Naive thymus-derived CD4-positive, alpha-beta T cell (primary cell): ENCODE measurements at regions of chr1 and their contacts with region 1.

Region 1: DNA sequence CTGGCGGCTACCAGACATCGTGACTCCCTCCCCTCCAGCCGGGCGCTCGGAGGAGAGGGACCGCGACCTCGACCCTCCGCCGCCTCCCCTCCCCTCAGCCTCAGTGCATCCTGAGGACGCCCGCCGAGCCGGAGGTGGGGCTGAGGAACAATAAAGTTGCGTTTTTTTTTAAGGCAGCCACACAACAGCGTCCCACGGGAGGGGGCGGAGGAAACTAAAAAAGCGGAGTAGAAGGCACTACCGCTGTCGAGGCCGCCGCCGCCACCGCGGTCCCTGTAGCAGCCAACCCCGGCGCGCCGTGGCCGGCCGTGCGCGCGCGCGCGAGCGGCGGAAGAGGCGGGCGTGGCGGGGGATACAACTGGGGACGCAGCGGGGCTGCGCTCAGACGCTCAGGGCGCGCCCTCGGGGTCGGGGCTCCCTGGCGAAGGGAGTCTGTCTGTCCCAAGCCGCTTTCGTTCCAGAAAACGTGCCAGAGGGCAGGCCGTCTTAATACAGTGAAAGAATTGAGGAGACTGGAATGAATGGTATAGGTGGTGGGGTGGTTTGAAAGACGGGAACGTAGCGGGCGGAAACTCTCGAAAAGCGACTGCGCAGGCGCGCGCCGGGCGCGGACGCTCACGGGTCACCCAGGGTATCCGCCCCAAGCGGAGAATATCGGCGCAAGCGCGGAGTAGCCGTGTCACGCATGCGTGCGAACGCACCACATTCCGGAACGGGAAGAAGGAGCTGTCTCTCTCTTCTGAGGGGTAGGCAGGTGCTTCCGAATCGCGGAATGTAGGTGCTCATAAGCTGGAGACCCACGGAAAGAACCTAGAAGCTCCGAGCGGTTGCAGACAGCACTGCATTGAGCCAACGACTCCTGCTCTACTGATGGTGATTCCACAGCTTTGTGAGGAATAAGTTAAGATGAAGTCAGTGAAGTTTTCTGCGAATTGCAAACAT is at the start of gene COP1:
- DNase-seq: peak; percentile 89 to 97 (median 96)
- ATAC-seq: peak; percentile 91
- H3K4me3 ChIP-seq: peak within 1 kb of the TSS; percentile 90
- H3K4me3 Mint-ChIP-seq: peak within 1 kb of the TSS; percentile 81 to 100 (median 98)
- H3K27ac ChIP-seq: peak within 1 kb of the TSS; percentile 81
- H3K27ac Mint-ChIP-seq: peak within 1 kb of the TSS; percentile 93 to 100 (median 97)
- H3K4me1 ChIP-seq: peaks cover 10 to 24% of the 10 kb centered on the region in 2 donors
- H3K4me1 Mint-ChIP-seq: peaks cover 20 to 56% (median 47%) of the 10 kb centered on the region in 7 donors
- H3K27me3 ChIP-seq: no peaks in the 10 kb centered on the region
- H3K27me3 Mint-ChIP-seq: peaks cover 0 to 3% (median 0%) of the 10 kb centered on the region in 5 donors
- total RNA-seq, gene COP1: 39.1 to 57.0 (median 43.9) TPM

Region 2: GRCh38 chr1:174333437-174333836 is 1873.8 kb before region 1 on chr1:
- CTCF ChIA-PET with region 1: no interaction called
- POLR2A ChIA-PET with region 1: no interaction called
- intact Hi-C with region 1: no loop called
- DNase-seq: no peak
- ATAC-seq: no peak
- H3K4me3 ChIP-seq: no peak overlapping the region
- H3K4me3 Mint-ChIP-seq: no peak overlapping the region
- H3K27ac ChIP-seq: no peak overlapping the region
- H3K27ac Mint-ChIP-seq: no peak overlapping the region
- H3K4me1 ChIP-seq: no peaks in the 10 kb centered on the region
- H3K4me1 Mint-ChIP-seq: peaks cover 0 to 5% (median 0%) of the 10 kb centered on the region in 7 donors
- H3K27me3 ChIP-seq: no peaks in the 10 kb centered on the region
- H3K27me3 Mint-ChIP-seq: no peaks in the 10 kb centered on the region

Region 3: GRCh38 chr1:176119549-176119948 is 87.7 kb before region 1 on chr1:
- CTCF ChIA-PET with region 1: no interaction called
- POLR2A ChIA-PET with region 1: no interaction called
- intact Hi-C with region 1: loop called in 1 of 2 experiments (anchors 5 kb)
- DNase-seq: no peak
- ATAC-seq: no peak
- H3K4me3 ChIP-seq: no peak overlapping the region
- H3K4me3 Mint-ChIP-seq: no peak overlapping the region
- H3K27ac ChIP-seq: no peak overlapping the region
- H3K27ac Mint-ChIP-seq: no peak overlapping the region
- H3K4me1 ChIP-seq: no peaks in the 10 kb centered on the region
- H3K4me1 Mint-ChIP-seq: peaks cover 0 to 8% (median 0%) of the 10 kb centered on the region in 7 donors
- H3K27me3 ChIP-seq: no peaks in the 10 kb centered on the region
- H3K27me3 Mint-ChIP-seq: no peaks in the 10 kb centered on the region

Region 4: GRCh38 chr1:176159993-176160392 is 47.2 kb before region 1 on chr1:
- CTCF ChIA-PET with region 1: no interaction called
- POLR2A ChIA-PET with region 1: interaction called, 5 read pairs
- intact Hi-C with region 1: loop called (anchors 5 kb)
- DNase-seq: no peak
- ATAC-seq: no peak
- H3K4me3 ChIP-seq: no peak overlapping the region
- H3K4me3 Mint-ChIP-seq: no peak overlapping the region
- H3K27ac ChIP-seq: no peak overlapping the region
- H3K27ac Mint-ChIP-seq: peak overlapping the region in 2 of 9 donors; percentile 19 to 21
- H3K4me1 ChIP-seq: peaks cover 0 to 6% of the 10 kb centered on the region in 2 donors
- H3K4me1 Mint-ChIP-seq: peaks cover 4 to 44% (median 26%) of the 10 kb centered on the region in 7 donors
- H3K27me3 ChIP-seq: no peaks in the 10 kb centered on the region
- H3K27me3 Mint-ChIP-seq: no peaks in the 10 kb centered on the region

Region 5: DNA sequence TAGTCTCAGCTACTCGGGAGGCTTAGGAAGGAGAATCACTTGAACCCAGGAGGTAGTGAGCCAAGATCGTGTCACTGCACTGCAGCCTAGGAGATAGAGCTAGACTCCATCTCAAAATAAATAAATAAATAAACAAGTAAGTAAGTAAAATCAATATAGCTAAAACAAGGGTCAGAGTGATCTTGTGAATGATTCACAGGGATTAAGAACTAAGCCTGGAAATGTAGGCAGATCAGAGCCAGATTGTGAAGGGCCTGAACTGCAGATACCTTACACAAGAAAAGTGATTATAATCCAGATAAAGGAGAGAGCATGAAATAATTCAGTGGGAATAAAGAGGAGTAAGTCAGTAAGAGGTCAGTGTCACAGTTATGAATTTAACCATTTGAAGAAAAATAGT is 41.7 kb before region 1 on chr1:
- CTCF ChIA-PET with region 1: no interaction called
- POLR2A ChIA-PET with region 1: interaction called, 5 read pairs
- intact Hi-C with region 1: loop called (anchors 5 kb)
- DNase-seq: no peak
- ATAC-seq: no peak
- H3K4me3 ChIP-seq: no peak overlapping the region
- H3K4me3 Mint-ChIP-seq: no peak overlapping the region
- H3K27ac ChIP-seq: no peak overlapping the region
- H3K27ac Mint-ChIP-seq: no peak overlapping the region
- H3K4me1 ChIP-seq: peaks cover 0 to 6% of the 10 kb centered on the region in 2 donors
- H3K4me1 Mint-ChIP-seq: peaks cover 14 to 53% (median 28%) of the 10 kb centered on the region in 7 donors
- H3K27me3 ChIP-seq: no peaks in the 10 kb centered on the region
- H3K27me3 Mint-ChIP-seq: no peaks in the 10 kb centered on the region

Region 6: DNA sequence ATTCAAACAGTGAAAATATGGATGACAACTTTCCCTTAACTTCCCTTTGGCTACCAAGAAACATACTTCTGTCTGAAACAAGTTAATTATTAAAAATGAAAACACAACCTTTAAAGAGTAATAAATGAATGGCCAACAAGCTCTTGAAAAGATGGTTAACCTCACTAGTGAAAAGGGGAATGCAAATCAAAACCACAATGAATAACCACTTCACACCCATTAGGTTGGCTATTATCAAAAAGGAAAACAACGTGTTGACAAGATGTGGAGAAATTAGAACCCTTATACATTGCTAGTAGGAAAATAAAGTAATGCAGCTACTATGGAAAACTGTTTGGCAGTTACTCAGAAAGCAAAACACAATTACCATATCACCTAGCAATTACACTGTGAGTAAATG is 14.2 kb before region 1 on chr1:
- CTCF ChIA-PET with region 1: no interaction called
- POLR2A ChIA-PET with region 1: no interaction called
- intact Hi-C with region 1: loop called in 1 of 2 experiments (anchors 1 kb)
- DNase-seq: no peak
- ATAC-seq: no peak
- H3K4me3 ChIP-seq: no peak overlapping the region
- H3K4me3 Mint-ChIP-seq: peak overlapping the region in 3 of 10 donors; percentile 12 to 26 (median 23)
- H3K27ac ChIP-seq: no peak overlapping the region
- H3K27ac Mint-ChIP-seq: no peak overlapping the region
- H3K4me1 ChIP-seq: peaks cover 12 to 17% of the 10 kb centered on the region in 2 donors
- H3K4me1 Mint-ChIP-seq: peaks cover 45 to 96% (median 92%) of the 10 kb centered on the region in 7 donors
- H3K27me3 ChIP-seq: no peaks in the 10 kb centered on the region
- H3K27me3 Mint-ChIP-seq: no peaks in the 10 kb centered on the region

Region 7: DNA sequence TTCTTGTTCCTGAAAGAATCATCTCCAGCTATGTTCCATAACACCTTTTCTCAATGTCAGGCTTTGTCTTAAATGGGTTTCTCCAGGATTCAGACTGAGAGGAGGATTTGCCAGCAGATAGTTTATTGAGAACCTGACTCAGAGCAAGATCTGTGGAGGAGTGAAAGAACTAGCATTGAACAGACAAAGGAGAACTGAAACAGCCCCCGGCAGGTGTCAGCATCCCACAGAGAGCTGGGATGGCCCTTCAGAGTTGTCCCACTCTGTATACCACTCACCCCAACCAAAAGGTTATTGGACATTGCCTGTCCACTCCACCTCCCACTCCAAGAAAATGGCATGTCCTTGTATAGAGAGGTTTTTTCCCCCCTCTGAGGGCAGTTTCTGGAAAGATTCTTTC is 526.4 kb after region 1 on chr1:
- CTCF ChIA-PET with region 1: no interaction called
- POLR2A ChIA-PET with region 1: no interaction called
- intact Hi-C with region 1: no loop called
- DNase-seq: no peak
- ATAC-seq: no peak
- H3K4me3 ChIP-seq: no peak overlapping the region
- H3K4me3 Mint-ChIP-seq: no peak overlapping the region
- H3K27ac ChIP-seq: no peak overlapping the region
- H3K27ac Mint-ChIP-seq: no peak overlapping the region
- H3K4me1 ChIP-seq: no peaks in the 10 kb centered on the region
- H3K4me1 Mint-ChIP-seq: no peaks in the 10 kb centered on the region
- H3K27me3 ChIP-seq: no peaks in the 10 kb centered on the region
- H3K27me3 Mint-ChIP-seq: peaks cover 0 to 5% (median 0%) of the 10 kb centered on the region in 5 donors